GM12878 (cell line): ENCODE measurements at regions of chr6 and their contacts with region 1.

Region 1: DNA sequence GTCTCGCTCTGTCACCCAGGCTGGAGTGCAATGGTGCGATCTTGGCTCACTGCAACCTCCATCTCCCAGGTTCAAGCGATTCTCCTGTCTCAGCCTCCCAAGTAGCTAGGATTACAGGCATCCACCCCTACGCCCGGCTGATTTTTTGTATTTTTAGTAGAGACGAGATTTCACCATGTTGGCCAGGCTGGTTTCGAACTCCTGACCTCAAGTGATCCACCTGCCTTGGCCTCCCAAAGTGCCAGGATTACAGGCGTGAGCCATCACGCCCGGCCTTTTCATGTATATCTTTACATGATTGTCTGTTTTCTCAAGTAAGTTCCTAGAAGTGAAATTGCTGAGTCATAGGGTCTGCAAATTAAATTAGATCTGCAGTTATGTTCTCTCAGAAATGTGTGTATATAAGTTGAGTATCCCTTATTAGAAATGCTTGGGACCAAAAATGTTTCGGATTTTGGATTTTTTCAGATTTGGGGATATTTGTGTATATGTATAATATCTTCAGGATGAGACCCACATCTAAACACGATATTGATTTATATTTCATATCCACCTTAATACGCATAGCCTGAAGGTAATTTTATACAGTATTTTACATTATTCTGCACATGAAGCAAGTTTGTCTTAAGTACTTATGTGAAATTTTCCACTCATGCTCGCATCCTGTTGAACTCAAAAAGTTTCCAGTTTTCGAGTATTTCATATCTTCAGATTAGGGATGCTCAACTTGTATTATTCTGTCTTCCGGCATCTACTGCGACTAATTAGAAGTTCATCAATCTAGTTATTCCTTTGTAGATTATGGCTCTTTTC is 40.4 kb downstream of the TAB2 start:
- DNase-seq: no peak
- ATAC-seq: no peak
- H3K4me3 ChIP-seq: no peak overlapping the region
- H3K27ac ChIP-seq: no peak overlapping the region
- H3K4me1 ChIP-seq: no peaks in the 10 kb centered on the region
- H3K27me3 ChIP-seq: no peaks in the 10 kb centered on the region
- CTCF ChIP-seq: no peak
- EP300 ChIP-seq: no peak
- POLR2A ChIP-seq: no peak
- RAD21 ChIP-seq: no peak

Region 2: DNA sequence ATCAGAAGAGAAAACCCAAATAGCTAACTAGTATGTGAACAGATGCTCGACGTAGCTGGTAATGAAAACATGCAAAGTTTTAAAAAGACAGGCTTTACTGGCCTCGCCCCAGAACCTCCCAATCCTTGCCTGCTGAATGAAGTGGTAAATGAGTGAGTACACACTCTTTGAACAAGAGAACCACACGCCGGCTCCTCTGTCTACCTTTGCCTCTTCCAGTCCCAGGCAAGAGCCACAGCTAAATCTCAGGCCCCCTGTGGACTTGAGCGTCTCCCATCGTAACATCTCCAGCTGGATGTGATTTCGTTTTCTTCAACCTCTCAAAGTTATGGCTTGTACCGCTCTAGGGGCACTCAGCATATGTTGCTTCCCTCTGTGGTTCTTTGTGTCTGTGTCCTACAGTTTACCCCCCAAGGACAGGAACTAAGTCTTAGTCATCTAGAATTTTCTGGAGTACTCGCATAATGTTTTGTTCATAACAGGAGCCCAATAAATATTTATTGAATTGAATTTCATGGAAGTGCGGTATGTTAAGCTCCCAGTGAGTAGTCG is 193.7 kb before region 1 on chr6:
- CTCF ChIA-PET with region 1: no interaction called
- POLR2A ChIA-PET with region 1: no interaction called
- RAD21 ChIA-PET with region 1: no interaction called
- SMC1A ChIA-PET with region 1: no interaction called
- in situ Hi-C with region 1: no loop called
- intact Hi-C with region 1: no loop called
- DNase-seq: no peak
- ATAC-seq: no peak
- H3K4me3 ChIP-seq: no peak overlapping the region
- H3K27ac ChIP-seq: no peak overlapping the region
- H3K4me1 ChIP-seq: peaks cover 6% of the 10 kb centered on the region; the same call in 1 of the 2 replicates
- H3K27me3 ChIP-seq: no peaks in the 10 kb centered on the region
- CTCF ChIP-seq: no peak
- EP300 ChIP-seq: no peak
- POLR2A ChIP-seq: no peak
- RAD21 ChIP-seq: no peak

Region 3: GRCh38 chr6:149368065-149368464 is 10.1 kb after region 1 on chr6:
- CTCF ChIA-PET with region 1: interaction called, 6 read pairs
- POLR2A ChIA-PET with region 1: no interaction called
- RAD21 ChIA-PET with region 1: no interaction called
- SMC1A ChIA-PET with region 1: interaction called, 11 read pairs
- in situ Hi-C with region 1: no loop called
- intact Hi-C with region 1: no loop called
- DNase-seq: peak; percentile 16
- ATAC-seq: peak; percentile 78
- H3K4me3 ChIP-seq: no peak overlapping the region
- H3K27ac ChIP-seq: no peak overlapping the region; the same call in 1 of the 2 replicates
- H3K4me1 ChIP-seq: peaks cover 32% of the 10 kb centered on the region
- H3K27me3 ChIP-seq: no peaks in the 10 kb centered on the region
- CTCF ChIP-seq: no peak
- EP300 ChIP-seq: no peak
- POLR2A ChIP-seq: no peak
- RAD21 ChIP-seq: no peak

Region 4: DNA sequence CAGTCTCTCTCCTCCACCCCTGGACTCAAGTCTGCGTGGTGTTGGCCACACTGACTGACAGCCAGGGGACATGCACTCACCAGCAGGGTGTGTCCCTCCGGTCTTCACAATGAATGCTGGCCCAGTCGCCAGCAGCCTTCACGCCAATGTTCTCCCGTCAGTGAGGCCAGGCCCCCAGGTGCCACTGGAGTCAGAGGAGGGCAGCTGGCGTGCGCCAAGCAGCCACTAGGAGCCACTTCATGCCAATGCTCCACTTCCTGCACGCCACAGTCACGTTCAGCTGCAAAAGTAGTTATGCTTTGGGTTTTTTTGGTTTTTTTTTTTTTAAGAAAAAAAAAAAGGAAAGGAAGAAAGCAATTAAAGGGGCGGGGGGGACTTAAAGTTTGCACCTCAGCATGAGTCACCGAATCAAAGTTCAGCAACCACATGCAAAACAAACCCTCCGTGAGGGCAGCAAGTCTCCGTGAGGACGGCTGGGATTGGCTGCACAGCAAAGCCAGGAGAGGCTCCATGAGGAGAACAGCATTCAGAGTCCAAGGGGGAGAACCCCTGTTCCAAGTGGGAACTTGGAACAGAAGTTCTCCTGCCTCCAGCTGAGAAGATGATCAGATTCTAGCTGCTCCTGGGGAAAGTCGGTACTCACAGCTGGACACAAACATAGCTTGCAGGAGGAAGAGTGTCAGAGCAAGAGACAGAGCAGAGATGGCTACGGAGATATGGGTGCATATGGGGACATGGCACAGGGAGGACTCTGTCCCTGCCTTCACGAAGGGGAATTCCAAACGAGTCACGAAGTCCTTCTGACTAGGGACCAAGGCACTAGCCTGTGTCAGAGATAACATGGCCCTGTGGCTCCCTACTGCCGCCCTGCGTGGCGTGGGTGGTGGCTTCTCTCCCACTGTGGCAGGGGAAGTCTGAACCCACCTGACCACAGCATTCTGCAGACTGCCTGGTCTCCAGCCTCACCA is 127.1 kb after region 1 on chr6 and contains the start of gene ZC3H12D:
- CTCF ChIA-PET with region 1: no interaction called
- POLR2A ChIA-PET with region 1: no interaction called
- RAD21 ChIA-PET with region 1: no interaction called
- SMC1A ChIA-PET with region 1: no interaction called
- in situ Hi-C with region 1: no loop called
- intact Hi-C with region 1: no loop called
- DNase-seq: no peak
- ATAC-seq: peak; percentile 65
- H3K4me3 ChIP-seq: peak within 1 kb of the TSS; percentile 71
- H3K27ac ChIP-seq: peak within 1 kb of the TSS; percentile 95
- H3K4me1 ChIP-seq: peaks cover 41% of the 10 kb centered on the region
- H3K27me3 ChIP-seq: no peaks in the 10 kb centered on the region
- CTCF ChIP-seq: peak; percentile 55 to 61 (median 56)
- EP300 ChIP-seq: peak; percentile 37 to 74; a peak in 3 of 4 replicates
- POLR2A ChIP-seq: peak; percentile 70
- RAD21 ChIP-seq: peak; percentile 45
- polyA plus RNA-seq, gene ZC3H12D: 1.4 to 2.0 TPM